Aorta (tissue), 5 donors: ENCODE measurements at regions of chr9 and their contacts with region 1.

Region 1: DNA sequence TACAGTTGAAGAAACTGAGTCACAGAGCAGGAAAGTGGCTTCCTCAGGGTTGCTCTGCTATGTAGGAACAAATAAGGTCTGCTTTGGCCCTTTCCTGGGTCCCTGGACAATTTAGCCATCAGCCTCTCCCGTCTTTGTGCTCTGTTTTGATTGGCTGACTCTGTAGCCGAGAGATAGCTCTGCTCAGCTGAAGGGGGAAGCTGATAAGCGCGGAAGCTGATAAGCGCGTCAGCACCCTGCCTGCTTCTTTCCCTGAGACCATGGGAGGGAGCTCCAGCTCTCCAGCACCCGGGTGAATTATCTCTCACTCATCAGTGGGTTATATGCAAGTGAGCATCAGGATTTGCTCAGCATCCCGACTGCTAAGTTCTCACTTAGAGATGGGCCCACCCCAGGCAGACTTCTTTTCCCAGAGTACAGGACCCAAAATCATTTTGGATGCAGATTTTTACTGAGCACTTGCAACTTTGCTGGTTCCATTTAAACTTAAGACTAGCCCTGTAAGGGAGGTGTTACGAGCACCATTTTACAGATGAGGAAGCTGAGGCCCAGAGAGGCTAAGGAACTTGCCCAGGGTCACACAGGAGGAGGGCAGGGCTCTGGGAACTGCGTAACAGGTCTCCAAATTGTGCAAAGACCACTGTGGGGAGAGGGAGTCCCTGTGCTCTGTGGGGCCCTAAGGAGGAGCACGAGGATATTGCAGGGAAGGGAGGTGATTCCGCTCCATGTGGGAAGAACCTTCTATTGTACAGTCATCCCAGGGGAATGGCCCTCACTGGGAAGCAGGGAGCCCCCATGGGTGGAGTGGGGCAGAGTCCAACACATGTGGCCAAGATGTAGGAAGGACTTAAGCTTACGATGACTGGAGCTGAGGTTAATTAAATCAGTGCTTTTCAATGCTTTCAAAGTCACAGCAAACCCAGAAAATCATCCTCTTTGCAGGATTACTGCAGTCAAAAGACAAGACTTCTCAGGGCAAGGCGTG is 83.7 kb upstream of the ORM1 start:
- DNase-seq: no peak
- ATAC-seq: peak; percentile 68
- H3K4me3 ChIP-seq: no peak overlapping the region
- H3K27ac ChIP-seq: peak overlapping the region in 1 of 2 donors; percentile 68
- H3K4me1 ChIP-seq: peaks cover 3 to 5% of the 10 kb centered on the region in 2 donors
- H3K27me3 ChIP-seq: no peaks in the 10 kb centered on the region

Region 2: GRCh38 chr9:114214173-114214572 is 25.0 kb before region 1 on chr9:
- intact Hi-C with region 1: loop called in 1 of 2 experiments (anchors 2 kb)
- DNase-seq: peak; percentile 89 to 92
- ATAC-seq: peak; percentile 46
- H3K4me3 ChIP-seq: no peak overlapping the region
- H3K27ac ChIP-seq: peak overlapping the region; percentile 78 to 90
- H3K4me1 ChIP-seq: peaks cover 7 to 13% of the 10 kb centered on the region in 2 donors
- H3K27me3 ChIP-seq: no peaks in the 10 kb centered on the region

Region 3: GRCh38 chr9:114276908-114277821 is 38.0 kb after region 1 on chr9:
- intact Hi-C with region 1: loop called in 1 of 2 experiments (anchors 5 kb)
- DNase-seq: peak; percentile 48 to 79
- ATAC-seq: no peak
- H3K4me3 ChIP-seq: no peak overlapping the region
- H3K27ac ChIP-seq: no peak overlapping the region
- H3K4me1 ChIP-seq: no peaks in the 10 kb centered on the region
- H3K27me3 ChIP-seq: no peaks in the 10 kb centered on the region